Motor neuron (in vitro differentiated cells): ENCODE measurements at regions of chr4 and their contacts with region 1.

Region 1: DNA sequence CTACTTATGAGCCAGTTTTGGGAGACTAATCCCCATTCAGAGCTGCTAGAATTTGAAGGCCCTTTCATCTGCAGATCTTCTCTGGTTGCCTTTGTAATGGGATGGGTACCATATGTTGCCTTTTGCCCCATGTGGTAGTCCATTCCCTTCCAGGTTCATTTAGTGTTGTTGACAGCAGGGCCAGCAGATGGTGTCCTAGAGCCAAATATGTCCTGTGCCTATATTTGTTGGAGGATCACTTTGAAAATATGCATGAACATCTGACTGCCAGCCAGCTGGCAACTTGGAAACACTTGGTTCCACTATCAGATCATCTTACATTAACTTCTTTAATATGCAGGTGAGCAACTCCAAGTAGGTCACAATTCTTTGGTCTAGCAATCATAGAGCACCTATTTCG is 30.4 kb downstream of the CFAP299 start:
- ATAC-seq: peak in 5 of 8 experiments; percentile 40 to 87 (median 78)
- H3K4me3 ChIP-seq: no peak overlapping the region
- H3K27ac ChIP-seq: no peak overlapping the region
- H3K4me1 ChIP-seq: no peaks in the 10 kb centered on the region

Region 2: GRCh38 chr4:79848329-79848728 is 517.6 kb before region 1 on chr4:
- in situ Hi-C with region 1: no loop called
- ATAC-seq: no peak
- H3K4me3 ChIP-seq: no peak overlapping the region
- H3K27ac ChIP-seq: no peak overlapping the region
- H3K4me1 ChIP-seq: no peaks in the 10 kb centered on the region

Region 3: DNA sequence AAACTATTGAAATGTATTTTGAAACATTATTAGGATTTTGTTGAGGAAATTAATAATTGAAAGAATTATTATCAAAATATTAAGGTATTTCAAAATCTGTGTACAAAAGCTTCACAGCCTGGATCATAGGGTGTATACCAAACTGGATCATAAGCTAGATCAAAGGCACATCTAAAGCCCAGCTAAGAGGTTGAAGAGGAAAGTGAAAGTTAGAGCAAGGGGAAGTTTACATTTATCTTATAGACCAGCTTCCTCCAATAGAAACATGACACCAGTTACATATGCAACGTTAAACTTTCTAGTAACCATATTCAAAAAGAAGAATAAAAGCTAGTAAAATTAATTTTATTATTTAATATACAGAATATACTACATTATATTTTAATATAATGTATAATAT is 437.4 kb after region 1 on chr4:
- in situ Hi-C with region 1: loop called in 1 of 9 experiments (anchors 25 kb)
- ATAC-seq: no peak
- H3K4me3 ChIP-seq: no peak overlapping the region
- H3K27ac ChIP-seq: no peak overlapping the region
- H3K4me1 ChIP-seq: no peaks in the 10 kb centered on the region

Region 4: DNA sequence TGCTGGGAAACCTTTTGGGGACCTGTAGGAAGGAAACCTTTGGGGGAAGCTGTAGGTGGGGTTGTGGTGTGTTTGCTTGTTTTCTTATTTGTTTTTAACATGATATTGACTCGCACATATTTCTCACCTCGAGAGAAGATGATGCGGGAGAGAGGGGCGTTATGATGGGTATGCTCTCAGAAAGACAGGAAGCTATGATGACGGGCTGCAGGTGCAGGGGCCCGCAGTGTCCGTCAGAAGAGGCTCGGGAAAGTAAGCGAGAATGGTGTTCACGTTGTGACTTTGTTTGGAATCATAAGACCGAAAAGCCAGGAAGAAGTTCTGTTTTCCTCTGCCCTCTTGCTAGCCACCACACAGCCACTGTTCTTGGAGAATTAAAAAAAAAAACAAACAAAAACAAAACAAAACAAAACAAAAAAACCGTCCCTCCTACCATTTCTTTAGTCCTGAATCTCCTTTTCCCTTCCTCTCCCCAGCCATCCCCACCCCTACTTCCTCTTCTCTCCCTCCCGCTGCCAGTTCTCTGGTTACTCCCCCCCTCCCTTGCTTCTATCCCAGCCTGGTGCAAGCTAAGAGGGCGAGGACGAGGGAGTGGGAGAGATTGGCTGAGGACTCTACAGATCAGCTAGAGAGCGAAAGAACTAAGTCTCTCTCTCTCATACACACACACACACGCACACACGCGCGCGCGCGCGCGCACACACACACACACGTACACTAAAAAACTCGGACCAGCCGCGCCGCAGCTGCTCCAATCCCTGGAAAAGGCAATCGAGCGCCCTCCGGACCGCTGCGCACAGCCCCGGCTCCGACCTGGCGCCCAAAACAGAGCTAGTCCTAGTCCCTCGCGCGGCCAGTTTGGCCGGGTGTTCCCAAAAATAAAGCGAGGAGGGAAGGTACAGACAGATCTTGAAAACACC is 664.4 kb after region 1 on chr4 and contains the start of gene BMP3:
- in situ Hi-C with region 1: loop called in 5 of 9 experiments (anchors 10 to 25 kb)
- ATAC-seq: peak; percentile 62 to 88 (median 82)
- H3K4me3 ChIP-seq: peak within 1 kb of the TSS; percentile 34 to 57 (median 47)
- H3K27ac ChIP-seq: no peak within 1 kb of the TSS
- H3K4me1 ChIP-seq: peaks cover 0 to 8% of the 10 kb centered on the region in 2 donors
- total RNA-seq, gene BMP3: 0.54 to 33.1 (median 2.1) TPM

Region 5: DNA sequence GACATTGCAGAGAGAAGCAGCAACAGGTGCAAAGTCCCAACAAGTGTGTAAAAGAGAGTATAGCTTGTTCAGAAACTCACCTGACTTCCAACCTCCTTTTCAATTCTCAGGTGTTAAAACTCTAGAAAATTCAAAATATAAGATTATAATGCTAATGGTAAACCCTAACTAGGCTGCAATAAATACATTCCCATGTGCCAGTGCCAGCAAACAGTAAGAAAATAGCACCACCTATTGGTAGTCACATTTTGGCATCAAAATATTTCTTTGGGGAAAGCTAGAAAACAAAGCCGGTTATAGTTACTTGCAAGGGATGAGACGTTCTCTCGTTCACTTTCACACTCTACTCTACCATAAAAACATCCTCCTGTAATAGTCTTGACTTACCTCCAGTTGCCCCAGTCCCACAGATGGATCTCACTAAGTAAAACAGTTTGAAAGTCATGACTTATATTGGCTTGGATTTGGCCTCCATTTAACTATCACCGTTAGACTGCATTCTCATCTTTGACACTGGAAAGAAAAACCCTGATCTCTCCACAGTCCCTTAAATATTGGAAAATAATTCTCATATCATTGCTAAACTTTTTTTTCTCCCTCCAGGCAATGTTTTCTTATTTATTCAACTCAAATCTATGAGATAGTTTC is 674.2 kb after region 1 on chr4:
- in situ Hi-C with region 1: loop called in 8 of 9 experiments (anchors 5 to 25 kb)
- ATAC-seq: peak in 3 of 8 experiments; percentile 44 to 70 (median 52)
- H3K4me3 ChIP-seq: no peak overlapping the region
- H3K27ac ChIP-seq: no peak overlapping the region
- H3K4me1 ChIP-seq: no peaks in the 10 kb centered on the region

Region 6: DNA sequence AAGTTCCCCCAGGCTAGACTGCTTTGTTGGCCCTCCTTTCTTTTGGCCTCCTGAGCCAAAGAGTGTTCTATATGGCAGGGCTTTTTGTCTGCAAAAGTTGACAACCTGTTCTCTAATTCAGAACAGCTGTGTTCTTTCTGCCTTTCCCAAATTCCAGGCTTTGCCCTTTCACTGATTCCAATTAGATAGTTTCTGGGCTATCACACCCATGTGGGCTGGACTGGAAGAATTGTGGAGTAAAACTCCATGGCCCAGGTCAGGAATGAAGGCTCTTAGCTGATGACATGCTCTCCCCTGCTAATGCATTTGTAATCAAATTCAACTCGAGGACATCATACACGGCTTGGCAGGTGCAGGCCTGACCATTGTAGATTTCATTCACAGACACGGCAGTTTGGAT is 684.0 kb after region 1 on chr4:
- in situ Hi-C with region 1: loop called in 7 of 9 experiments (anchors 5 to 25 kb)
- ATAC-seq: peak in 3 of 8 experiments; percentile 13 to 34 (median 22)
- H3K4me3 ChIP-seq: no peak overlapping the region
- H3K27ac ChIP-seq: no peak overlapping the region
- H3K4me1 ChIP-seq: no peaks in the 10 kb centered on the region

Region 7: GRCh38 chr4:81351654-81352445 is 985.9 kb after region 1 on chr4:
- in situ Hi-C with region 1: loop called in 4 of 9 experiments (anchors 25 kb)
- ATAC-seq: peak; percentile 77 to 92 (median 84)
- H3K4me3 ChIP-seq: no peak overlapping the region
- H3K27ac ChIP-seq: no peak overlapping the region
- H3K4me1 ChIP-seq: peaks cover 9 to 34% of the 10 kb centered on the region in 2 donors